Left cardiac atrium (tissue), 4 donors: ENCODE measurements at regions of chr19 and their contacts with region 1.

Region 1: GRCh38 chr19:10884274-10884673 is 12.9 kb downstream of the CARM1 start:
- DNase-seq: no peak
- ATAC-seq: peak in 1 of 2 donors; percentile 18

Region 2: DNA sequence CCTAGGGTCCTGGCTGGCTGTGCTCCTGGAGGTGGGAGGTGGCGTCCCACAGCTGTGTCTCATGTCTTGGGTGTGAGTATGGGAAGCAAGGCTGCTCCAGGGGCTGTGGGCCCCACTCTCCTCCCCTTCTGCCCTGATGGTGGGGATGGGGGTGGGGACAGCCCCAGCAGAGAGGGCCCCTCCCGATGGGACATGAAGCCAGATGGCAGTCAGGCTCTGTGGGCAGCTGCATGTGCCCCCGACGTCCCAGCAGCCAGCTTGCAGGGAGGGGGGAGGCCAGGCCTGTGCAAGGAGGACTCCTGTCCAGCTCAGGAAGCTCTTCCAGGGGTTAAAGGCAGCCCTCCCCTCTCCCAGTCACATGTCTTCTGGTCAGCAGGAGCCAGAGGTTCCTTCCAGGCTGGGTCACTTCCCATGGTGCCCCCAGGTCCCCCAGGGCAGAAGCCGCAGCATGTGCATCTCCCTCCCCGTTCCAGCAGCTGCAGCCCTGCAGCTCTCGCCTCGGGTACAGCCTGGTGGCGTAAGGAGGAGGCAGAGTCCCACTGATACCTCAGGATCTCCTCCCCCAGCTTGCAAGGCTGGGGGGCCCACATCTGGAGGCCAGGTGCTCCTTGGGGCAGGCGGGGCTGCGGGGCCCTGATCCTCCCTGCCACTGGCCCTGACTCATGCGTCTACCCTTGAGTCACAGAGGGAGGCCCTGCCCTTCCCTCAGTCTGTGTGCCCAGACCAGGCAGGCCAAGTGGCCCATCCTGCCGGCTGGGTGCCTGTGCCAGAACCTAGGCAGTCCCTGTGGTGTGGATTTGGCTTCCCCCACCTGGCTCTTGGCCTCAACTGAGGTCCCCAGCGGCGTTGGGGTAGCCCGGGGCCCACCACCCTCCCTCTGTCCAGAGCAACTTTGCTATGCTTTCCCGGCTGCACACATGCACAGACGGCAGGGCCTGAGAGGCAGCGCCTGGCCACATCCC is 31.1 kb after region 1 on chr19:
- intact Hi-C with region 1: loop called (anchors 5 to 10 kb)
- DNase-seq: no peak
- ATAC-seq: no peak

Region 3: GRCh38 chr19:10946964-10947657 is 62.8 kb after region 1 on chr19:
- intact Hi-C with region 1: no loop called
- DNase-seq: no peak
- ATAC-seq: peak; percentile 25 to 32